Activated CD4-positive, alpha-beta T cell treated with anti-CD3 and anti-CD28 coated beads for 36 hours (primary cell): ENCODE measurements at regions of chr9 and their contacts with region 1.

Region 1: DNA sequence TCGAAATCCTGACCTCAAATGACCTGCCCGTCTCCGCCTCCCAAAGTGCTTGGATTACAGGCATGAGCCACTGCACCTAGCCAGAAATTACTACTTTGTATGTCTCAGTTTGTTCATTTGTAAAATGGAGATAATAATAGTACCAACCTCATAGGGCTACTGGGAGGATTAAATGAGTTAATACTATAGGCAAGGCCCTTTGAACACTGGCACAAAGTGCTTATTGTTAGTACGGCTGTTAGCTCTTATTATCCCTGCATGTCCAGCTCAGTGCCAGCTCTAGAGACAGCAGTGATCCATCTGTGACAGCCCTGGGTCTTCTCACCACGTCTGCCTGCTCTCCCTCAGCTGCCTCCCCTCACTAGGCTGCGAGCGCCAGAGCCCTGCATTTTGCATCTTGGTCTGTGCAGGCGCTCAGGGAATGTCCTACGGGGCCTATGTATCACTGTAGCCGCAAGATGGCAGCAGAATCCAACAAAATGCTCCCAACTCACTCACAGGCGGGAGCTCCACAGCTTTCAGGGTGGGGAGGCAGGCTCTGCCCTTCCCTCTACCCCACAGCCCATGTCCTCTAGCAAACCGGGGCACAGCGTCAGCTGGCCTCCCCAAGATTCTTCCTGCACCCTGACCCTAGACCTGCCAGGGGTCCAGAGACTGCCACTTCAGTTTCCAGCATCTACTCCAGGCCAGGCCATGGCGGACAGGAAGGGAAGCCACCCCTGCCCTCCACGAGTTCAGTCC is 17.7 kb upstream of the AKNA start:
- DNase-seq: peak; percentile 88
- ATAC-seq: peak; percentile 100
- H3K4me3 Mint-ChIP-seq: no peak overlapping the region
- H3K27ac Mint-ChIP-seq: no peak overlapping the region
- H3K4me1 Mint-ChIP-seq: peaks cover 6% of the 10 kb centered on the region
- H3K27me3 Mint-ChIP-seq: no peaks in the 10 kb centered on the region

Region 2: DNA sequence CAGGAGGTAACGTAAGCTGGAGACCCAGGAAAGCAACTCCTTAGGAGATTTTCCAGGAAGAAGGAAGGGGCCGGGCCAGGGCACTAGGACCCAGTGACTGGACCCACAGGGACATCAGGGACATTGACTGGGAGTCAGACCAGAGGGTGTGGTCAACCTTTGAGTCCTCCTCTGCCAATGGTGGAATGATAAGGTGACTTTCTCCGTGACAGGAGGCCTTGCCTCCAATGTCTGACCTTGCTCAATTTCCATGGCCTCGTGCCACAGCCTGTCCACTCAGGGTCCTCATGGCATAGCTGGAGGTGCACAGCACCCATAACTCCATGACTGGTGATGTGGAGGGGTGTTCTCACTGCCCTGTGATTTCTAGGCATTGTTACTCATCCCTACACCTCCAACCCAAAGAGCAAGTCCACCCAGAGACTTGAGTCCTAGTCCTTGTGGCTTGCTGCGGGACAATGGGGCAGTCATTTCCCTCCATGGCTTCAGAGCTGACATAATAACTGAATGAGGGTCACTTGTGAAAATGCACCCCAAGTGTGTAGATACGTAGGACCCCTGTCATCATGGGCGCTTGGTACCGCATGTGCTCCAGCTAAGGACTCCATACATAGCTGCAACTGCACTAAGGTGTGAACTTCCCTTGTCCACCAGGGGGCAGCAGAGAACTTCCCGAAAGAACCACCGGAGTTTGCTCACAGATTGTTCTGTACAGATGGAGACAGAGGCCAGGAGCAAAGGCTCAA is 323.3 kb before region 1 on chr9:
- CTCF ChIA-PET with region 1: no interaction called
- POLR2A ChIA-PET with region 1: no interaction called
- intact Hi-C with region 1: no loop called
- DNase-seq: peak; percentile 91
- ATAC-seq: peak; percentile 96
- H3K4me3 Mint-ChIP-seq: no peak overlapping the region
- H3K27ac Mint-ChIP-seq: no peak overlapping the region
- H3K4me1 Mint-ChIP-seq: no peaks in the 10 kb centered on the region
- H3K27me3 Mint-ChIP-seq: peaks cover under 1% of the 10 kb centered on the region

Region 3: DNA sequence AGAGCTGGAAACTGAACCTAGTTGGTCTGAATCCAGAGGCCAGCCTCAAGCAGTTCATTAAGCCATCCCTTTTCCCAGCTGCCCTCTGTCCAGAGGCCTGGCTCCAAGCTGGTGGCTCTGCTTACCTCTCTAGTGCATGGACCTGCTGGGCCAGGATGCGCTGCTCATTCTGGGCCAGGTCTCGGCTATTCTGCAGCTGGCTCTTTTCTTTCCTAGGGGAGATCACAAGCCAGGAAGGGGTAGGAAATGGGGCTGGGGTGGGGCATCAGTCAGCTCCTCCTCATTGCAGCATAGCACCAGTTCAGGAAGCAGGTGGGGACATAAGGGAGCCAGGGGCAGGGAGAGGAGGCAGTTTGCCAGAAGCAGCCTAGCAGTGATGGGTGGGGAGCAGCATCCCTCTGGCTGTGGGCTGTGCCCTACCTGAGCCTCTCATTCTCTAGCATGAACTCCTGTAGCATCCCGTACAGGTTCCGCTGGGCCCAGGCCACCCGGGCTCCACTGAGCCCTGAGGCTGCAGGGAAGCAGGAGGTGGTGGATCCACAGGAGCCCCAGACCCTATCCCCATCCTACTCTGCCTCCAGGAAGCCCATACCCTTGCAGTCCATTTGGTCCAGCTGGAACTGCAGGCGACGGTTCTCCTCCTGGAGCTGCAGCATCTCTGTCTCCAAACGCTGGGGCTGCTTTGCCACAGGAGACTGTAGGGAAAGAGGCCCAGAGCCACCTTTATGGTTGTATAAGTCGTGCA is 311.5 kb before region 1 on chr9:
- CTCF ChIA-PET with region 1: no interaction called
- POLR2A ChIA-PET with region 1: no interaction called
- intact Hi-C with region 1: no loop called
- DNase-seq: no peak
- ATAC-seq: no peak
- H3K4me3 Mint-ChIP-seq: no peak overlapping the region
- H3K27ac Mint-ChIP-seq: no peak overlapping the region
- H3K4me1 Mint-ChIP-seq: no peaks in the 10 kb centered on the region
- H3K27me3 Mint-ChIP-seq: peaks cover 24% of the 10 kb centered on the region

Region 4: DNA sequence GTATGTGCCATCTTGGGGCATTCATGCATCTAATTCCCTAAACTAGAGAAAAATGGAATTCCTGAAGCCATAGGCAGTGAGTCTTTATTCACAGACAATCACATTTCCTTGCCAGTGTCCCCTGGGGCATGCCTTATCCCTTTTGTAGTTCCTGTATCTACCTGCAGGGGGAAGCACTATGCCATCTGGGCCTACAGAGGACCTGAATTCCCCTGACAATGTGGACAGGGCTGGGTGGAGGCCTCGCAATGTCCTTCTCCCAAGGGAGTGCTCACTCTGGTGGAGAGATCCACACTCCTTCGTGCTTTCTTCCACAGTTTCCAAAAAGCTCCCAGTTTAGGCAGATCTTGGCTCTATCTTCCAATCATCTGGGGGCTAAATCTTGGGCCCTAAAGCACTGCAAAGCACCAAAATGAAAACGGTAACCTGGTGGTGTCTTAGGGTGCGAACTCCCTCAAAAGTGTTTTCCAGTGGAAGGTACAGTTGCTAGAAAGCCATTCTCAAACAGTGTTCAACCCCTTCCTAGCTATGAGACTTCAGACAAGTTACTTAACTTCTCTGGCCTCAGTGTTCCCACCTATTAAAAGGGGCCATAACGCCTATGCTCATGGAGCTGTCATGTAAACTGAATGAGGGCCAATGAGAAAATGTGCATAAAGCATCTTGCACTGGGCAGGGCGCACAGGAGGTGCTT is 82.3 kb after region 1 on chr9:
- CTCF ChIA-PET with region 1: interaction called, 6 read pairs
- POLR2A ChIA-PET with region 1: no interaction called
- intact Hi-C with region 1: loop called in 1 of 2 experiments (anchors 2 kb)
- DNase-seq: peak; percentile 72
- ATAC-seq: peak; percentile 63
- H3K4me3 Mint-ChIP-seq: no peak overlapping the region
- H3K27ac Mint-ChIP-seq: no peak overlapping the region
- H3K4me1 Mint-ChIP-seq: peaks cover 25% of the 10 kb centered on the region
- H3K27me3 Mint-ChIP-seq: no peaks in the 10 kb centered on the region

Region 5: DNA sequence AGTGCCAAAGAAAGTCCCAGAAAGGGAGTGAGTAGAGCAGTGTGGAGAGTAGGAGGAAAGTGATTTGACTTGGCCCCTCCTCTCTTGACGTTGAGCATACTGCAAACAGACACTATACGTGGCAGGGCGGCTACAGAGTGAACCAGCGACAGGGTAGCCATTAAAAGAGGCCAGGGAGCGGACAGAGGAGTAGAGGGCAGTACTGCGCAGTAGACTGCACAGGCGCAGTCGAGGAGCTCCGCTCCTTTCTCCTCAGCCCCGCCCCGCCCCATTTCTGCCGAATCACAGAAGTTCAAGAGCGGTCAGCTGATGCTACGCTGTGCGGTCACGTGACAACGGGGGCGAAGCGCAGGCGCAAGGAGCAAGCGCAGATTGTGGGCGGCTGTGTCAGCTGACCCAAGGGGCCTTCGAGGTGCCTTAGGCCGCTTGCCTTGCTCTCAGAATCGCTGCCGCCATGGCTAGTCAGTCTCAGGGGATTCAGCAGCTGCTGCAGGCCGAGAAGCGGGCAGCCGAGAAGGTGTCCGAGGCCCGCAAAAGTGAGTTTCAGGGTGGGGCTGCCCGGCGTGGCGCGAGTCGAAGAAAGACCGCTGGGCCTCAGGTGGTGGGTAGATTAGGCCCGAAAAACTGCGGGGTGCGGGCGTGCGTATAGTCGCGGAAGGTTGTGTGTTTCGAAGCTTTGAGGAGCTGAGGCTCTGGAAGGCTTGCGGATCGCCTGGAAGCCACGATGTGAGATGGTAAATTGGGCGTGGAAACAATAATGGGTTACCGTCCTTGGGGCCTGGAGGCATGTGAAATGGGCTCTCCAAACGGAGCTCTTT is 182.1 kb after region 1 on chr9 and contains the start of gene ATP6V1G1:
- CTCF ChIA-PET with region 1: interaction called, 14 read pairs
- POLR2A ChIA-PET with region 1: no interaction called
- intact Hi-C with region 1: no loop called
- DNase-seq: peak; percentile 100
- ATAC-seq: peak; percentile 96
- H3K4me3 Mint-ChIP-seq: peak within 1 kb of the TSS; percentile 99
- H3K27ac Mint-ChIP-seq: peak within 1 kb of the TSS; percentile 100
- H3K4me1 Mint-ChIP-seq: peaks cover 44% of the 10 kb centered on the region
- H3K27me3 Mint-ChIP-seq: no peaks in the 10 kb centered on the region
- total RNA-seq, gene ATP6V1G1: 33.8 to 37.7 TPM

Region 6: DNA sequence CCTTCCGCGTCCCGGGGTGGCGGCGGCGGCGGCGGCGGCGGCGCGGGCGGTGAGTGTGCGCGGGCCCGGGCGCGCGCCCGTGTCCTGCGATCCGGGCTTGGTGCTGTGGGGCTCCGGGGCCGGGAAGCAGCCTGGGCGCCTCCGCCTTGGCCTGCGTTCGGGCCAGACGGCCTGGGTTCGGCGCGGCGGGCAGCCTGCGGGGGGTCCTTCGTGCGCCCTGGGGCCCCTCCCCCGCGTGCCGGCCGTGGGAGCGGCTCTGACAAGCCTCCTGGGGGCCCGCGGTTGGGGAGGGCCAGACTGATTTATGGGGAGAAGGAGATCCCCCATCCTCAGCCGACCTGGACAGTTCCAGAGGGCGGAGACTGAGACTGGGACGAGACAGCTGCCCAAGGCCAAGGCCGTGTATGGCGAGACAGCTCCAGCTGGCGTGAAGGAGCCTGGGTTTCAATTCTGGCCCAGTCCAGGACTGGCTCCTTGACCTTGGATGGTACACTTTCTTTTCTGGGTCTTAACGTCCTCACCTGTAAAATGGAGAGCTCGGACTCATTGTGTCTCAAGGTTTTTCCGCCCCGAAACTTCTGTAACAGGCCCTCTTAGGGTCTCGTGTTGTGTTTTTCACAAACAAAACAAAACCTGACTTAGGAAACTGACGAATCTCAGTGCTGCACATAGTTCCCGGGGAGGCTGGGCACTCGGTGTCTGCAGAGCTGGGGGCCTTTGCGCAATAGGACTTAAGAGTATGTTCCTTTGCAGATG is 206.2 kb after region 1 on chr9:
- CTCF ChIA-PET with region 1: interaction called, 11 read pairs
- POLR2A ChIA-PET with region 1: no interaction called
- intact Hi-C with region 1: no loop called
- DNase-seq: peak; percentile 66
- ATAC-seq: peak; percentile 66
- H3K4me3 Mint-ChIP-seq: peak overlapping the region; percentile 77
- H3K27ac Mint-ChIP-seq: peak overlapping the region; percentile 79
- H3K4me1 Mint-ChIP-seq: peaks cover 50% of the 10 kb centered on the region
- H3K27me3 Mint-ChIP-seq: no peaks in the 10 kb centered on the region

Region 7: DNA sequence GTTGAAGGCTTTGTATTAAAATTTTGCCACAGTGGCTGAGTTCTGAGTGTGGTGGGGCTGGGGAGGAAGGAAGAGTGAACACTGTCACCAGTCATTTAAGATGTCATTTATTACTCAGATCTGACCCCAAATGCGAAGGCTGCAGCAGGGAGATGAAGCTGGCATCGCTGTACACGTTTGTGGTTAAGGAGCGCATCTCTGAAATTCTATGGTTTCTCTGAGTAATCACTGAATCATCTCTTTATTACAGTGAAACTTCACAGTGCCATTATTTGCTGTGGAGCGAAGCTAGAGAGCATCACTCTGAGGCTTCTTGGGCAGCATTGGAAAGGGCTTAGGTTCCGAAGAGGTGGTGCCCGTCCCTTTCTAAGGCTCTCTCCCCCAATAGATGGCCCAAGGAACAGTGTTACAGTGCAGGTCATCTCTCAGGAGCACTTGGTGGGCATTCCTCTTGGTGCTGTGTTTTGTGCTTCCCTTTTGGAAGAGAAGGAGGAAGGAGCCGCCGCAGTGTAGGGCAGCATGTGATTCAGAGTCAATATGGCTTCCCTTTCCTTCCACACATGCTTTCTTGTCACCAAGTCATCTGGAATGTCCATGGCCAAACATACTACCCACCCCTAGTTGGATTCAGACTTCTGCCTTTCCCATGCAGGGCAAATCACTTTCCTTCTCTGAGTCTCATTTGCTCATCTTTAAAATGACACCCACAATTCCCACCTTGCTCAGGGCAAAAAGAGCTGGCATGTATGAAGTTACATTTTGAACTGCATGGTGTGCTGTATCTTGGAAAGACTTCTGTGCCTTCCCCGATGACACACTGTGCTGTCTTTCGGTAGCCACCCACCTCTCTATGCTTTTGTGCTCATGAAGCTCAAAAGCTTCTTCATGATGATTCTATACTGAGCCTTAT is 285.8 kb after region 1 on chr9:
- CTCF ChIA-PET with region 1: no interaction called
- POLR2A ChIA-PET with region 1: no interaction called
- intact Hi-C with region 1: no loop called
- DNase-seq: peak; percentile 87
- ATAC-seq: peak; percentile 75
- H3K4me3 Mint-ChIP-seq: peak overlapping the region; percentile 48
- H3K27ac Mint-ChIP-seq: peak overlapping the region; percentile 98
- H3K4me1 Mint-ChIP-seq: peaks cover 94% of the 10 kb centered on the region
- H3K27me3 Mint-ChIP-seq: no peaks in the 10 kb centered on the region

Region 8: DNA sequence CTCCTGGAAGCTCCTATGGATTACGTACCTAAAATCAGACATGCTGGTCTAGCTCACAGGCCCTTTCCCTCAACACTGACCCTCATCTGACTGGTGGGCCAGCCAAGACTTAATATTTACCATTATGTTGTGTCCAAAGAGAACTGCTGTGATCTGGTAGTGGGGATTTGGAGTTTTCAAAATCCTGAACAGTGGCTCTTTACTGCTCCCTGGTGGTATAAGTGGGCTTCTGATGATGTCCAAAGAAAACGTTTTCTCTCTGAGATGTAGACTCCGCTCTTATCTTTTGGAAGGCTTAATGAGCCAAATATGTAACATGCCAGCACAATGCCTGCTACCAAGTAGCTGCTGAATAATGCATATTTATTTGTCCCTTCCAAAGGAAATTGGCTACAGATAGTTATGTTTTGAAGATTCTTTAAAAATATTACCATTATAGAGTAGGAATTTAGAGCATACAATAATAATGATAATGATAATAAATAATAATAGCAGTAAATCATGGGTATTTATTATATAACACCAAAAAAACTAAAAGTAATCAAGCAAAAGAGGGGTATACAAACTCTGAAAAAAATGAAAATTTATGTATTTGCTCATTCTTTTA is 1119.1 kb after region 1 on chr9:
- CTCF ChIA-PET with region 1: interaction called, 4 read pairs
- POLR2A ChIA-PET with region 1: no interaction called
- intact Hi-C with region 1: loop called in 1 of 2 experiments (anchors 5 kb)
- DNase-seq: peak; percentile 16
- ATAC-seq: no peak
- H3K4me3 Mint-ChIP-seq: no peak overlapping the region
- H3K27ac Mint-ChIP-seq: no peak overlapping the region
- H3K4me1 Mint-ChIP-seq: no peaks in the 10 kb centered on the region
- H3K27me3 Mint-ChIP-seq: peaks cover 28% of the 10 kb centered on the region